HepG2 (cell line): ENCODE measurements at regions of chr1 and their contacts with region 1.

Region 1: DNA sequence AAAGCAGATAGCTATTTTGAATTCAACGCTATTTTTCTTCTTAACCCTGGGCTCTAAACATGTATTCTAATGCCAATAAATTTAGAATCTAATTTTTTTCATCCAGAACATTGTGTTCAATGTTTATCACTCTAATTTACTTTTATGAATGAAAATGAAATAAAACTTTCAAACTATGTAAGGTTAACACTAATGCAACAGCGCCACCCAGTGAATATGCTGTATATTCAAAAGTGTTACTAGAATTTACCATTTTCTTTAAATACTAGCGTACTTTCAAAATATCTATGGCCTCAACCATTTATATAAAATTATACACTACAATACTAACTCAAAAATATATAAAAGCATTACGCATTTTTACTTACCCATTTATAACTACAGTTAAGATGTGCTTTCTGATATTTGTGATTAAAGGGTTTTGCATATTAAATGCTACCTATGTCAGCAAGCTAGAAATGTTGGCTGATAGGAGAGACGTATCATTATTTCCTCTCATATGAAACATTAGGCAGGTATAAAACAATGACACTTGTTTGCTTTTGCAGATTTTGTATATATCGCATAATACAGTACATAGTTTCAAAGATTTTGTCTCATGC is 5.9 kb upstream of the NUF2 start:
- DNase-seq: peak; percentile 31
- ATAC-seq: no peak
- H3K4me3 ChIP-seq: no peak overlapping the region
- H3K27ac ChIP-seq: no peak overlapping the region
- H3K4me1 ChIP-seq: peaks cover 9% of the 10 kb centered on the region
- H3K27me3 ChIP-seq: no peaks in the 10 kb centered on the region
- CTCF ChIP-seq: peak; percentile 54
- EP300 ChIP-seq: no peak
- POLR2A ChIP-seq: no peak
- RAD21 ChIP-seq: no peak

Region 2: GRCh38 chr1:162847839-162848453 is 467.9 kb before region 1 on chr1:
- CTCF ChIA-PET with region 1: interaction called, 7 read pairs
- POLR2A ChIA-PET with region 1: no interaction called
- in situ Hi-C with region 1: loop called (anchors 10 kb)
- intact Hi-C with region 1: no loop called
- DNase-seq: peak; percentile 62
- ATAC-seq: peak; percentile 54; the same call in 2 of the 3 replicates
- H3K4me3 ChIP-seq: no peak overlapping the region
- H3K27ac ChIP-seq: no peak overlapping the region
- H3K4me1 ChIP-seq: no peaks in the 10 kb centered on the region
- H3K27me3 ChIP-seq: peaks cover 1 to 6% of the 10 kb centered on the region in 2 experiments; a peak in 1 of 5 replicates
- CTCF ChIP-seq: peak; percentile 78
- EP300 ChIP-seq: no peak
- POLR2A ChIP-seq: no peak
- RAD21 ChIP-seq: no peak

Region 3: GRCh38 chr1:162854245-162854882 is 461.5 kb before region 1 on chr1:
- CTCF ChIA-PET with region 1: interaction called, 8 read pairs
- POLR2A ChIA-PET with region 1: no interaction called
- in situ Hi-C with region 1: loop called (anchors 10 kb)
- intact Hi-C with region 1: loop called (anchors 1 kb)
- DNase-seq: peak; percentile 59
- ATAC-seq: peak; percentile 92
- H3K4me3 ChIP-seq: no peak overlapping the region
- H3K27ac ChIP-seq: no peak overlapping the region
- H3K4me1 ChIP-seq: no peaks in the 10 kb centered on the region
- H3K27me3 ChIP-seq: peaks cover 0 to 8% of the 10 kb centered on the region in 2 experiments; a peak in 2 of 5 replicates
- CTCF ChIP-seq: peak; percentile 71
- EP300 ChIP-seq: no peak
- POLR2A ChIP-seq: no peak
- RAD21 ChIP-seq: peak; percentile 37; the same call in 1 of the 2 replicates

Region 4: DNA sequence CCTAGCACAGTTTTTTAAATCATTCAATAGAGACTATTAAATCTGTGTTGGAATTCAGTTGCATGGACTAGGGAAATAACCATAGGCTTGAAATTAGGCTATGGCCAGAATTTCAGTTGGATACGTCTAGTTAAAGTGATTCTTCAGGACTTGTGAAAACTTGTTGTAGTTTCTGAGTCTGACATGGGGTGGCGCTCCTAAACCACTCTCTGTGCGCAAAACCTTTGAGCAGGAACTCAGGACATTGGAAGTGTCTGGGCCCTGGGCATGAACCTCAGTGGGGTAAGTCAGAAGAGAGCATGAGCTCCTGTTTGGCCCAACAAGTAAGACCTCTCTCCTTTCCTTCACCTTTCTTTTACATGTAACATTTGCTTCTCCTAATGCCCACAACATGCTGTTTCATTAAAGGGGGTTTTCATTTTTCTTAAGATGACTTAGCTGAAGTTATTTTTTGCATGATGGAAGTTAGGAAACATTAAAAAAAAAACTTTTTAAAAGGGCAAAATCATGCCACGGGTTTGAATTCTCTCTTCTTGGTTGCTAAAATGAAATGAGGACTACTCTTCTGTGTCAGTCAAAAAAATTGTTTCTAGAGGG is 437.8 kb before region 1 on chr1:
- CTCF ChIA-PET with region 1: interaction called, 9 read pairs
- POLR2A ChIA-PET with region 1: no interaction called
- in situ Hi-C with region 1: no loop called
- intact Hi-C with region 1: loop called (anchors 1 kb)
- DNase-seq: peak; percentile 45
- ATAC-seq: peak; percentile 55
- H3K4me3 ChIP-seq: no peak overlapping the region
- H3K27ac ChIP-seq: no peak overlapping the region
- H3K4me1 ChIP-seq: peaks cover 25% of the 10 kb centered on the region
- H3K27me3 ChIP-seq: peaks cover 0 to 19% of the 10 kb centered on the region in 2 experiments; a peak in 2 of 5 replicates
- CTCF ChIP-seq: peak; percentile 87
- EP300 ChIP-seq: no peak
- POLR2A ChIP-seq: no peak
- RAD21 ChIP-seq: peak; percentile 72

Region 5: DNA sequence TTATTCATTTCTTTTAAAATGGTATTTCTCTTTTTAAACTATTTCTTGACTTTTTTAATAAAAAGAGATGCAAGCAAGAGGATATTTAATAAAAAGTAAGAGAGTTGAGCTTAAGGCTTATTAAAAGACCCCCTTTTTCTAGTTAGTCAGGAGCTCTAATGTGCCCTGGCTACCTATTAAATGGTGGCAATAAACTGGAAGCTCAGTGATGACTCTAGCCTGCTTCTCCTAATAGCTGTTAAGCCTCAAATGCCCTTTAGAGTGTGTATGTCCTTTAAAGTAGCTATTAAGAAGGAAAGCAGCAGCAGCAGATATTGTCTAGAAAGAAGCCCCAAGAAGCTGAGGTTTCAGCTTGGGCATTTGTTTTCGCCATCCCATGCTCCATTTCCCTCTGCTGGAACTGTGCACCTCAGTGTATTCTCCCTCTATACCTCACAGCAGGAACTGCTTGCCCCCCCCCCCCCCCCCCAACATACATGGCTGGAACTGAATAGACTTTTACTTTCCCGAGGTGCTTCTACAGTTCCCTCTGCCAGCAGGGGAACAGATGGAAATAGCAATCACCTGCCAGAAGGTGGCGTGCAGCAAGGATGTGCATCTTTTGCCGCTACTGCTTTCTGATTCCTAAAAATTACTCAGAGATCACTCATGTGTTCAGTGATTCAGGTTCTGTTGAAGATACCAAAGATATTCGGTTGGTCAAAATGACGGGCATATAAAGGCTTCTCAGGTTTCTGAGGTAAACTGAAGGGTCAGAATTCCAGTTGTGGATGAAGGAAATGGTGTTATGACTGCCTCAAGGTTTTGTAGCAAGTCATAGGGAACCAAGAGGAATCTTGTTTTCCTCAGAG is 244.2 kb before region 1 on chr1:
- CTCF ChIA-PET with region 1: interaction called, 22 read pairs
- POLR2A ChIA-PET with region 1: no interaction called
- in situ Hi-C with region 1: loop called (anchors 5 kb)
- intact Hi-C with region 1: no loop called
- DNase-seq: peak; percentile 30
- ATAC-seq: peak; percentile 86
- H3K4me3 ChIP-seq: no peak overlapping the region
- H3K27ac ChIP-seq: no peak overlapping the region
- H3K4me1 ChIP-seq: no peaks in the 10 kb centered on the region
- H3K27me3 ChIP-seq: 0 out of 5 replicates have a peak, but pooled peaks cover 0 to 2% of the 10 kb centered on the region in 2 experiments
- CTCF ChIP-seq: peak; percentile 72
- EP300 ChIP-seq: no peak
- POLR2A ChIP-seq: no peak
- RAD21 ChIP-seq: no peak